IMR-90 (cell line): ENCODE measurements at regions of chr20 and their contacts with region 1.

Region 1: GRCh38 chr20:47220161-47220582 is 136.3 kb downstream of the ZMYND8 start:
- DNase-seq: no peak
- ATAC-seq: no peak
- H3K4me3 ChIP-seq: no peak overlapping the region
- H3K27ac ChIP-seq: no peak overlapping the region; the same call in 1 of the 2 replicates
- H3K4me1 ChIP-seq: peaks cover 2% of the 10 kb centered on the region; the same call in 1 of the 2 replicates
- H3K27me3 ChIP-seq: no peaks in the 10 kb centered on the region
- CTCF ChIP-seq: peak; percentile 53
- POLR2A ChIP-seq: no peak
- RAD21 ChIP-seq: peak; percentile 47

Region 2: GRCh38 chr20:47196091-47197081 is 23.8 kb before region 1 on chr20:
- CTCF ChIA-PET with region 1: no interaction called
- POLR2A ChIA-PET with region 1: no interaction called
- dilution Hi-C with region 1: no loop called
- in situ Hi-C with region 1: no loop called
- intact Hi-C with region 1: no loop called
- DNase-seq: peak; percentile 60
- ATAC-seq: peak; percentile 94
- H3K4me3 ChIP-seq: no peak overlapping the region
- H3K27ac ChIP-seq: no peak overlapping the region
- H3K4me1 ChIP-seq: peaks cover 3% of the 10 kb centered on the region; the same call in 1 of the 2 replicates
- H3K27me3 ChIP-seq: no peaks in the 10 kb centered on the region
- CTCF ChIP-seq: peak; percentile 96
- POLR2A ChIP-seq: peak; percentile 42; the same call in 1 of the 2 replicates
- RAD21 ChIP-seq: peak; percentile 96

Region 3: GRCh38 chr20:47283411-47283810 is 63.2 kb after region 1 on chr20:
- CTCF ChIA-PET with region 1: no interaction called
- POLR2A ChIA-PET with region 1: no interaction called
- dilution Hi-C with region 1: no loop called
- in situ Hi-C with region 1: no loop called
- intact Hi-C with region 1: no loop called
- DNase-seq: no peak
- ATAC-seq: no peak
- H3K4me3 ChIP-seq: no peak overlapping the region
- H3K27ac ChIP-seq: no peak overlapping the region
- H3K4me1 ChIP-seq: peaks cover 6% of the 10 kb centered on the region
- H3K27me3 ChIP-seq: no peaks in the 10 kb centered on the region
- CTCF ChIP-seq: no peak
- POLR2A ChIP-seq: no peak
- RAD21 ChIP-seq: no peak

Region 4: DNA sequence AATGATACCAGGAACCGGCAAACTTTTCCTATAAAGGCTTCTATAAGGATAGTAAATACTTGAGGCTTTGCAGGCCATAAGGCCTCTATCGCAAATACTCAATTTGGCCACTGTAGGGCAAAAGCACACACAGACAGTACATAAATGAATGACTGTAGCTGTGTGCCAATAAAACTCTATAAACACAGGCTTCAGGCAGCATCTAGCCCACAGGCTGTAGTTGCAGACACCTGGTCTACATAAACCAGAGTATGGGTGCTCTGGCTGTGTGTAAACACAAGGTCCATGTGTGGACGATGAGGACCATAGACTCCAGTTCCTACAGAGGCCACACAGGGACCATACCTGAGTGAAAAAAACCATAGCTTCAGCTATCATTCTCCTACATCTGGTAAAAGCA is 84.1 kb after region 1 on chr20:
- CTCF ChIA-PET with region 1: no interaction called
- POLR2A ChIA-PET with region 1: interaction called, 20 read pairs
- dilution Hi-C with region 1: no loop called
- in situ Hi-C with region 1: no loop called
- intact Hi-C with region 1: no loop called
- DNase-seq: peak; percentile 72
- ATAC-seq: peak; percentile 90
- H3K4me3 ChIP-seq: no peak overlapping the region
- H3K27ac ChIP-seq: peak overlapping the region; percentile 42
- H3K4me1 ChIP-seq: peaks cover 14% of the 10 kb centered on the region
- H3K27me3 ChIP-seq: no peaks in the 10 kb centered on the region
- CTCF ChIP-seq: peak; percentile 30; the same call in 1 of the 2 replicates
- POLR2A ChIP-seq: no peak
- RAD21 ChIP-seq: peak; percentile 40